Head of caudate nucleus (tissue), 42 donors: ENCODE measurements at regions of chr3 and their contacts with region 1.

Region 1: GRCh38 chr3:32467333-32468070 is 35.1 kb downstream of the CMTM6 start:
- DNase-seq: peak; percentile 30 to 89 (median 74)

Region 2: DNA sequence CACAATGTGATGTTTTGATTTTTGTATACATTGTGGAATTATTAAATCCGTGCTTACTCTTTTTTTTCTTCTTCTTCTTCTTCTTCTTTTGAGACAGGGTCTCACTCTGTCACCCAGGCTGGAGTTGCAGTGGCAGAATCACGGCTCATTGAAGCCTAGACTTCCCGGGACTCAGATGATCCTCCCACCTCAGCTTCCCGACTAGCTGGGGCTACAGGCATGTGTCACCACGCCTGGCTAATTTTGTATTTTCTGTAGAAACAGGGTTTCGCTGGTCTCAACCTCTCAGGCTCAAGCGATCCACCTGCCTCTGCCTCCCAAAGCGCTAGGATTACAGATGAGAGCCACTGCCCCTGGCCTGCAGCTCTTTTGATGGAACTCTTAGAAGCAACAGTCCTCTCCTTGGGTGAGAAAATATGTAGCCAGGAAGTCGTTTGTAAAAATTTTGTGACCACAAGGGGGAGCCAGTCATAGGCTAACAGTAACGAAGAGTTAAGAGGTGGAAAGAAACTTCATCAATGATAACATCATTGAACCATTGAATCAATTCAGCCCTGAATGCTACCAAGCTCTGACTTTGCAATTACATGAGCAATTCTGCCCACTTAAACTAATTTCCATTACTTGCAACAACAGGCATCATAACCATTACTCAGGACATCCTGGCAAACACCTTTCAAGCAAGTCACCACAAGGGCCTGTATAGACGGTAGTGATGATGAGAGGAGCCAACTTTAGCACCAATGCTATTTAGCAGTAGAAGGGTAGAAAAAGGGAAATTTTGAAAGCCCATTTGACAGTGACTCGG is 92.5 kb before region 1 on chr3:
- intact Hi-C with region 1: loop called (anchors 10 kb)
- DNase-seq: peak in 30 of 42 donors; percentile 23 to 86 (median 66)